T-cell (primary cell): ENCODE measurements at regions of chr1 and their contacts with region 1.

Region 1: DNA sequence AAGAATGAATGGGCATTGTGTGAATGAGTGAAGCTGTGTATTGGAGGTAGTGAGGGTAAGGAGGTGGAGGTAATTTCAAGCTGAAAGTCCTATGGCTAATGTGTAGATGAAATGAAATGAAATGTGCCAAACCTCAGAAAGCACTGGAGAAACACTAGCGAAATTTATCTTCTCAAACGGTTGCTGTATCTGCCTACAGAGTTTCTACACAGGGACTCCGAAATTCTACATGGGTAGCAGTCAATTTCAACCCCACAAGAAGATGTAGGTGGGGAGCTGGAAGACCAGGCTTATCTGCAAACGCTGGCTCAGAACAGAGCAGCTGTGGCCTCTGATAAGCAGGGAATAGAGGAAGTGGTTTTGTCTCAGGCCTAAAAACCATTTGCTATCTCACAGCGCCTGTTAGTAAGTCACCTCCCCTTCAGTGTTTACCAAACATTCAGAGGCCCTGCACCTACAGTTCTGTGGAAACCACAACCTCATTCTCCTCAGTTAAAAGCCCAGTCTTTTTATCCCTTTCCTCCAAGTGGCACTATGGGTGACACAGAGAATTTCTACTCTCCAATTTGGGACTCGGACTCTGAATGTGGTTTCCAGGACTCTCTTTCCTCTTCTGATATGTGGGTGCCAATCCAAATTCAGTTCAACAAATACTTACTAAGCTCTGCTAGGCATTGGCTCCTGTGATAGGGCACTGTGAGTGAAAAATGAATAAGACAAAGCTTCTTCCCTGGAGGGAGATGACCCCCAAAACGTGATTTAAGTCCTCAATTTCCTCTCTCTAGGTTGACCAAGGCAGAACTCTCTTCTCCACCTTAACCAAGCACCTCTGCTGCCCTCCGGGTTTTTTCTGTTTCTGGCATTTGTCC is 17.2 kb upstream of the SLAMF6 start:
- DNase-seq: peak in 34 of 35 experiments; percentile 26 to 77 (median 48)
- ATAC-seq: peak; percentile 89 to 95 (median 95)
- H3K4me3 ChIP-seq: peak overlapping the region in 1 of 2 donors; percentile 7
- H3K4me3 Mint-ChIP-seq: peak overlapping the region; percentile 52 to 58 (median 56)
- H3K27ac ChIP-seq: peak overlapping the region; percentile 71
- H3K27ac Mint-ChIP-seq: peak overlapping the region; percentile 96 to 98
- H3K4me1 ChIP-seq: peaks cover 33 to 47% of the 10 kb centered on the region in 2 experiments
- H3K4me1 Mint-ChIP-seq: peaks cover 58 to 61% (median 60%) of the 10 kb centered on the region in 3 donors
- H3K27me3 ChIP-seq: no peaks in the 10 kb centered on the region
- H3K27me3 Mint-ChIP-seq: no peaks in the 10 kb centered on the region

Region 2: GRCh38 chr1:160489513-160490261 is 50.5 kb before region 1 on chr1:
- CTCF ChIA-PET with region 1: no interaction called
- POLR2A ChIA-PET with region 1: no interaction called
- DNase-seq: no peak
- ATAC-seq: no peak
- H3K4me3 ChIP-seq: no peak overlapping the region
- H3K4me3 Mint-ChIP-seq: no peak overlapping the region
- H3K27ac ChIP-seq: peak overlapping the region; percentile 39
- H3K27ac Mint-ChIP-seq: peak overlapping the region; percentile 78 to 83
- H3K4me1 ChIP-seq: no peaks in the 10 kb centered on the region
- H3K4me1 Mint-ChIP-seq: peaks cover 8 to 39% (median 14%) of the 10 kb centered on the region in 3 donors
- H3K27me3 ChIP-seq: no peaks in the 10 kb centered on the region
- H3K27me3 Mint-ChIP-seq: no peaks in the 10 kb centered on the region

Region 3: GRCh38 chr1:160550572-160551034 is 10.4 kb after region 1 on chr1:
- CTCF ChIA-PET with region 1: interaction called, 6 to 10 read pairs
- POLR2A ChIA-PET with region 1: interaction called in 1 of 2 experiments, 3 read pairs
- DNase-seq: peak in 31 of 35 experiments; percentile 13 to 67 (median 50)
- ATAC-seq: peak in 3 of 4 experiments; percentile 47 to 72 (median 64)
- H3K4me3 ChIP-seq: no peak overlapping the region
- H3K4me3 Mint-ChIP-seq: no peak overlapping the region
- H3K27ac ChIP-seq: no peak overlapping the region
- H3K27ac Mint-ChIP-seq: peak overlapping the region; percentile 55 to 67
- H3K4me1 ChIP-seq: peaks cover 0 to 21% of the 10 kb centered on the region in 2 experiments
- H3K4me1 Mint-ChIP-seq: peaks cover 26 to 54% (median 27%) of the 10 kb centered on the region in 3 donors
- H3K27me3 ChIP-seq: no peaks in the 10 kb centered on the region
- H3K27me3 Mint-ChIP-seq: no peaks in the 10 kb centered on the region

Region 4: DNA sequence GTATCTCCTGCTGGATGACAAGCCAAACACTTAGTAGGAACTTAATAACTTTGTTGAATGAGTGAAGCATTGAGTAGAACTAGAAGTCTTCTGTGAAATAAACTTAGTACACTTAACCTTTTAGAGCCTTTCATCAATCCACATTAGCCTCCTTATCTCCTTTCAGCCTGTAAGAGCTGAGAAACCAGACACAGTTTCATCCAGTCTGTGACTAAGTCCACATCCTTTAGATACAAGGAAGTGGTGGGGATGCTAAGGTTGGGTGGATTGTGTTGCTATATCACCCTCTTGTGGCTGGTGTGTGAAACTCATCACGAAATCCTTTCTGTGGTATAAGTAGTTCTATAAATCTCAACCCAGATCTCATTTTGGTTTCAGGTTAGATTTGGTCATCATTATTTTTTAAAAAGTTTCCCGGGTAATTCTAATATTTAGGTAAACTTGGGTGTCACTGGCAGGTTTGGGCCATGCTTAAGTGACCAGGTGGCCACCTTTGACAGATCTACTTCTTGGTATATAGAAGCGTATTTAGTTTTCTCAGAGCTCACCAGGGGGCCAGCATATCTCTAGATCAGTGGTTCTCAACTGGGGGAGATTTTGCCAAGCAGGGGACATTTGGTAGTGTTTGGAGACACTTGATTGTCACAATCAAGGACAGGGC is 66.9 kb after region 1 on chr1:
- CTCF ChIA-PET with region 1: interaction called, 7 to 15 read pairs
- POLR2A ChIA-PET with region 1: no interaction called
- DNase-seq: peak in 33 of 35 experiments; percentile 24 to 89 (median 61)
- ATAC-seq: peak; percentile 86 to 98 (median 94)
- H3K4me3 ChIP-seq: no peak overlapping the region
- H3K4me3 Mint-ChIP-seq: peak overlapping the region in 1 of 3 donors; percentile 60
- H3K27ac ChIP-seq: peak overlapping the region; percentile 34
- H3K27ac Mint-ChIP-seq: peak overlapping the region; percentile 88 to 90
- H3K4me1 ChIP-seq: peaks cover 6 to 26% of the 10 kb centered on the region in 2 experiments
- H3K4me1 Mint-ChIP-seq: peaks cover 25 to 48% (median 48%) of the 10 kb centered on the region in 3 donors
- H3K27me3 ChIP-seq: no peaks in the 10 kb centered on the region
- H3K27me3 Mint-ChIP-seq: no peaks in the 10 kb centered on the region